Right lobe of liver (tissue), 6 donors: ENCODE measurements at regions of chr3 and their contacts with region 1.

Region 1: DNA sequence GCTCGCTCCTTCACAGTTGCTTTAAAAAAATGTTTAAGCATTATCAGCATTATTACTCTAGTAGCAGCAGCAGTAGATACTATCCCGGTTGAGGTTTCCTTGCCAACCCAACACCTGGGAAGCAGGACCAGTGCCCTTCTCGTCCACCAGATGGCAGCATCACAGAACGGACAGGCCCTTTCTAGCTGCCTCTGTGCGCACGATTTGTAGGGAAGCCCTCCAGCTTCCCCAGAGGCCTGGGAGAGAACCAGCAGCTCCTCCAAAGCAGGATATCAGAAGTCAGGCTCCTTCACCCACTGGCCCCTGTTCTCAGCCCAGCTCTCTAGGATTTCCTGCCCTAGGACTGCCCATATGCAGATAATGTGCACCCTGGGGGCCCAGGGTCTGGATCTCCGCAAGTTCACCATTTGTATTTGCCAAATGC is 16.8 kb upstream of the ESYT3 start:
- DNase-seq: peak; percentile 67 to 80 (median 78)
- ATAC-seq: peak; percentile 96 to 99 (median 98)
- H3K4me3 ChIP-seq: no peak overlapping the region
- H3K27ac ChIP-seq: no peak overlapping the region
- H3K4me1 ChIP-seq: no peaks in the 10 kb centered on the region
- H3K27me3 ChIP-seq: no peaks in the 10 kb centered on the region
- CTCF ChIP-seq: peak; percentile 84 to 94 (median 90)
- POLR2A ChIP-seq: no peak

Region 2: DNA sequence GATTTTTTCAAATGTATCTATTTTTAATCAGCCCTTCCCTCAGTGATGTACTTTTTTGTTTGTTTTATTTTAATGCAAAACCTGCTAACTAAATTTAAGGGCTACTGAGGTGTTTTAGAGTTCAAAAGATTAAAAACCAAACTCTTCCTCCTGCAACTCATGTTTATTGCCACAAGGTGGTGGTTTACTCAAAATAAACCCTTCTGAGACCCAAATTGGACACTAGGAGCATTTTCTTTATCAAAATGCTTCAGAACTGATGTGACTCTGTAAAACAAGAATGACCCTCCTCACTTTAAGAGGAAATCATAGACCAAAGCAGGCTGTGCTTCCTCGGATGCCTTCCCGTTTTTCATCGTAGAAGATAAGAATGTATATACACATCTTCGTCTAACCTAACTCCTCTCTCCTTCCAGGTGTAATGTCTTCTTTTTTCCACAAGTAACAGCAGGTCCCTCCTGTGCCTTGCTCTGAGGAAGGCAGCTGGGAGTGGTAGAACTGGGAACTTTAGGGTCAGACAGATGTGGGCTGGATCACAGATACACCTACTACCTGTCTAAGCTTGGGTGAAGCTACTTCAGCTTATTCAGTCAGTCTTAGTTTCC is 85.0 kb before region 1 on chr3:
- intact Hi-C with region 1: loop called (anchors 10 kb)
- DNase-seq: no peak
- ATAC-seq: peak; percentile 46 to 51 (median 47)
- H3K4me3 ChIP-seq: no peak overlapping the region
- H3K27ac ChIP-seq: no peak overlapping the region
- H3K4me1 ChIP-seq: peaks cover 0 to 3% (median 0%) of the 10 kb centered on the region in 4 donors
- H3K27me3 ChIP-seq: no peaks in the 10 kb centered on the region
- CTCF ChIP-seq: peak; percentile 61 to 75 (median 68)
- POLR2A ChIP-seq: no peak

Region 3: DNA sequence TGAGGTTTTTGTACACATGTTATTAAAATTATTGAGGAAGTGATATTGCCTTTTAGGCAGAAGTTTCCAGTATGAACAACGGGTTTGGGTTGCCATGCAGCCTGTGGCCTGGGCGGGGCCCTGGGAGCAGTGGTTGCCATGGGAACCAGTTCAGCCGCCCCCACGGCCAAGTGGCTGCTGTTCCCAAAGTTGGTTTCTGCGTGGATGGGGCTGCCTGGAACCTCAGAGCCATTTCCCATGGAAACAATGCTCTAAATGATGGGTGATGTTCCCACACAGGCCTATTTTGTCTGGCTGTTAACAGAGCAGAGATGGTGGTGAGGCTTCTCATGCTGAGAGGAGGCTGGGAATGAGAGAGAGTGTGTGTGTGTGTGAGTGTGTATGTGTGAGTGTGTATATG is 49.7 kb before region 1 on chr3:
- intact Hi-C with region 1: no loop called
- DNase-seq: peak in 1 of 3 donors; percentile 44
- ATAC-seq: peak; percentile 30 to 57 (median 54)
- H3K4me3 ChIP-seq: no peak overlapping the region
- H3K27ac ChIP-seq: no peak overlapping the region
- H3K4me1 ChIP-seq: no peaks in the 10 kb centered on the region
- H3K27me3 ChIP-seq: no peaks in the 10 kb centered on the region
- CTCF ChIP-seq: no peak
- POLR2A ChIP-seq: no peak

Region 4: GRCh38 chr3:138608322-138609135 is 191.0 kb after region 1 on chr3 and contains the start of gene FAIM:
- intact Hi-C with region 1: no loop called
- DNase-seq: peak; percentile 72 to 78 (median 73)
- ATAC-seq: peak; percentile 81 to 86 (median 84)
- H3K4me3 ChIP-seq: peak within 1 kb of the TSS; percentile 82 to 85 (median 85)
- H3K27ac ChIP-seq: peak within 1 kb of the TSS; percentile 85 to 89 (median 86)
- H3K4me1 ChIP-seq: peaks cover 0 to 4% (median 2%) of the 10 kb centered on the region in 4 donors
- H3K27me3 ChIP-seq: no peaks in the 10 kb centered on the region
- CTCF ChIP-seq: no peak
- POLR2A ChIP-seq: peak; percentile 51
- total RNA-seq, gene FAIM: 3.3 to 6.1 (median 3.9) TPM

Region 5: DNA sequence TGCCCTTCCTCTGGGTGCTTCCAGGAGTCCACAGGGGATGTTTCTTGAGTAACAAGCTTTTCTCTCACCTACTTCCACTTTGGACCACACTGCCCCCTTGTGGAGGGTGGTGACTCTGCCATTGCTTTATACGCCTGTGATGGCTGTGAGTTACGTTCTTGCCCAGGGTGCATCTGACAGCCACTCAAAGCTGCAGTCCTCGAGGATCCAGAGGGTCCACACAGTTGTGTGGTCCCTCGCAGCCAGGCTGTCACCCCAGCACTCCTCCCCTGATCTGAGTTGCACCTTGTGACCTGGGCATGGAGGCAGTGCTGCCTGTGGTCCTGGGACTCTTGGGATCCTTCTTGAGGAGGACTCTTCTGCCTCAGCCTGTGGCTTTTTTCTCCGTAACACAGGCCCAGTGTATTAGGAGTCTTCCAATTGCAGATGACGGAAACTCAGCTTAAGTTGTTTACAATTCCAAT is 506.0 kb after region 1 on chr3:
- intact Hi-C with region 1: loop called in 1 of 2 experiments (anchors 10 kb)
- DNase-seq: peak; percentile 73 to 81 (median 76)
- ATAC-seq: peak; percentile 94 to 97 (median 95)
- H3K4me3 ChIP-seq: no peak overlapping the region
- H3K27ac ChIP-seq: no peak overlapping the region
- H3K4me1 ChIP-seq: no peaks in the 10 kb centered on the region
- H3K27me3 ChIP-seq: no peaks in the 10 kb centered on the region
- CTCF ChIP-seq: peak; percentile 88 to 96 (median 94)
- POLR2A ChIP-seq: no peak